IMR-90 (cell line): ENCODE measurements at regions of chr5 and their contacts with region 1.

Region 1: GRCh38 chr5:131104169-131104808 is 60.8 kb downstream of the HINT1 start:
- DNase-seq: no peak
- ATAC-seq: no peak
- H3K4me3 ChIP-seq: no peak overlapping the region
- H3K27ac ChIP-seq: no peak overlapping the region
- H3K4me1 ChIP-seq: no peaks in the 10 kb centered on the region
- H3K27me3 ChIP-seq: no peaks in the 10 kb centered on the region; the same call in 1 of the 2 replicates
- CTCF ChIP-seq: no peak
- POLR2A ChIP-seq: no peak
- RAD21 ChIP-seq: no peak

Region 2: DNA sequence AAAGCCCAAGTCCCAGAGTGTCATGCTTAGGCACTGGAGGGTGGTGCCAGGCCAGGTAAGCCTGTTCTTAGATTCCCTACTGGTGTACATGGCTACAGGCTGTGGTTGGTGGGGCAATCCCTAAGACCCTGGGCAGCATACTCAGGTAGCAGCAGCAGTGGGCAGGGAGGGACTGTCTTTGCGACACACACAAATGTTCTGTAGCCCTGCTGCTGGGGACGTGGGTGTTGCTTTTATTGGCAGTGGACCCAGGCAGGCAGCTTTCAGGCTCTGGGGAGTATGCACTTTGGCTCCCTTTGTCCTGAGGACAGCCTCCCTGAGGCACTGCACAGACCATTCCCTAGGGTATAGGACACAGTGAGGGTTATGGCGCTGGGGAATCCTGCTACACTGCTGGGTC is 1781.3 kb before region 1 on chr5:
- CTCF ChIA-PET with region 1: no interaction called
- POLR2A ChIA-PET with region 1: interaction called, 11 read pairs
- dilution Hi-C with region 1: no loop called
- in situ Hi-C with region 1: no loop called
- intact Hi-C with region 1: no loop called
- DNase-seq: no peak
- ATAC-seq: no peak
- H3K4me3 ChIP-seq: no peak overlapping the region
- H3K27ac ChIP-seq: no peak overlapping the region
- H3K4me1 ChIP-seq: no peaks in the 10 kb centered on the region
- H3K27me3 ChIP-seq: no peaks in the 10 kb centered on the region
- CTCF ChIP-seq: no peak
- POLR2A ChIP-seq: no peak
- RAD21 ChIP-seq: no peak